Aorta (tissue), 5 donors: ENCODE measurements at regions of chr6 and their contacts with region 1.

Region 1: DNA sequence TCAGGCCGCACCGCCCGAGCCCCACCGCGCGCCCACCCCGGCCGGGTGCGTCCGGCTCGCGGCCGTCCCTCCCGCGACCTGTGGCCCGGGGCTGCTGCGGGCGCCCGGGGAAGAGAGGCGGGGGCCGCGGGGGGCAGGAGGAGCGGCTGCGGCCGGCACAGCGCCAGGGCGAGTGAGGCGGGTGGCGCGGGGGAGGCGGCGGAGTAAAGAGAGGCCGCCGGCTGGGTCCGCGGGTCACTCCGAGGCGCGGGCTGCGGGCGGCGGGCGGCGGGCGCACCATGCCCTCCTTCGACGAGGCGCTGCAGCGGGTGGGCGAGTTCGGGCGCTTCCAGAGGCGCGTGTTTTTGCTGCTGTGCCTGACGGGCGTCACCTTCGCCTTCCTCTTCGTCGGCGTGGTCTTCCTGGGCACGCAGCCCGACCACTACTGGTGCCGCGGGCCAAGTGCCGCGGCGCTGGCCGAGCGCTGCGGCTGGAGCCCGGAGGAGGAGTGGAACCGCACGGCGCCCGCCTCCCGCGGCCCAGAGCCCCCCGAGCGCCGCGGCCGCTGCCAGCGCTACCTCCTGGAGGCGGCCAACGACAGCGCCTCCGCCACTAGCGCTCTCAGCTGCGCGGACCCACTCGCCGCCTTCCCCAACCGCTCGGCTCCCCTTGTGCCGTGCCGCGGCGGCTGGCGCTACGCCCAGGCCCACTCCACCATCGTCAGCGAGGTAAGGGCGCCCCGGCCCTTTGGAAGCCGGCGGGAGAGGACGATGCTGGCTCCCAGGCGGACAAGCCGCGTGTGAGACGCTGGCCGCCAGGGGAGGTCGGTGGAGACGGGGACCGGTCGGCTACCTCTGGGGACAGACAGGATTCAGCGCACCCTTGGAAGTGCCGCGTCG is at the start of gene SLC22A3:
- DNase-seq: peak in 1 of 2 donors; percentile 87
- ATAC-seq: peak; percentile 64
- H3K4me3 ChIP-seq: peak within 1 kb of the TSS; percentile 59 to 85
- H3K27ac ChIP-seq: peak within 1 kb of the TSS; percentile 84 to 86
- H3K4me1 ChIP-seq: peaks cover 0 to 6% of the 10 kb centered on the region in 2 donors
- H3K27me3 ChIP-seq: no peaks in the 10 kb centered on the region
- total RNA-seq, gene SLC22A3: 48.4 to 61.0 TPM

Region 2: GRCh38 chr6:160137989-160138835 is 210.2 kb before region 1 on chr6:
- intact Hi-C with region 1: loop called (anchors 2 to 5 kb)
- DNase-seq: no peak
- ATAC-seq: peak; percentile 27
- H3K4me3 ChIP-seq: no peak overlapping the region
- H3K27ac ChIP-seq: peak overlapping the region in 1 of 2 donors; percentile 84
- H3K4me1 ChIP-seq: peaks cover 0 to 6% of the 10 kb centered on the region in 2 donors
- H3K27me3 ChIP-seq: no peaks in the 10 kb centered on the region

Region 3: DNA sequence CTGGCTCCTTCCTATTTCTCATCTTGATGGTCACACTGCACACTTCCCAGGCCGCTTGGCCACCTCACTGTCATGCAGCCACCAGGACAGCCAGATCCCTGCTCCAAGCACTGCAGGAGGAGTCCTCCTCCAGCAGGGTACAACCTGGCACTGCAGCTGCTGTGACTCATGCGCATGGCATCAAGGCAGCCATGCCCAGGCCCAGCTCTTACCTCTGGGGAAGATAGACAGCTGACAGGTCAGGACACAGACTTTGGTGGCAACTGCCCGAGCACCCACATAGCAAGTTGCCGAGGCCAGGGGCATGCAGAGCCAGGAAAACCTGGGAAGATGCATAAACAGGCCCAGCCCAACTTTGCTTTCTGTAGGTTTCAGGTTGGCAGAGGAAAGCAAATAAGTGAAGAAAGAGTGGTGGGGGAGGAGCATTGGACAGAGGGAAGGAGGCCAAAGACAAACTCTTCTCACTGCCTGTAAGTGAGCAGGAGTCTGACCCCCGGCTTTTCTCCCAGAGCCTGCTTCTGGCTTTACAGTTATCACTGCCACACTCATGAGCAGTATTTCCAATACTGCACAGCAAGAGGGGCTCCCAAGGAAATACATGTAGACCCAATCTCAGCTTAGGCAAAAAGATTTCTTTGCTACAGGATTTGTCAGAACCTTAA is 38.6 kb after region 1 on chr6:
- intact Hi-C with region 1: loop called in 1 of 2 experiments (anchors 5 kb)
- DNase-seq: peak; percentile 67 to 81
- ATAC-seq: peak; percentile 61
- H3K4me3 ChIP-seq: no peak overlapping the region
- H3K27ac ChIP-seq: peak overlapping the region in 1 of 2 donors; percentile 66
- H3K4me1 ChIP-seq: peaks cover 2 to 14% of the 10 kb centered on the region in 2 donors
- H3K27me3 ChIP-seq: no peaks in the 10 kb centered on the region